MCF 10A (cell line): ENCODE measurements at regions of chr9 and their contacts with region 1.

Region 1: DNA sequence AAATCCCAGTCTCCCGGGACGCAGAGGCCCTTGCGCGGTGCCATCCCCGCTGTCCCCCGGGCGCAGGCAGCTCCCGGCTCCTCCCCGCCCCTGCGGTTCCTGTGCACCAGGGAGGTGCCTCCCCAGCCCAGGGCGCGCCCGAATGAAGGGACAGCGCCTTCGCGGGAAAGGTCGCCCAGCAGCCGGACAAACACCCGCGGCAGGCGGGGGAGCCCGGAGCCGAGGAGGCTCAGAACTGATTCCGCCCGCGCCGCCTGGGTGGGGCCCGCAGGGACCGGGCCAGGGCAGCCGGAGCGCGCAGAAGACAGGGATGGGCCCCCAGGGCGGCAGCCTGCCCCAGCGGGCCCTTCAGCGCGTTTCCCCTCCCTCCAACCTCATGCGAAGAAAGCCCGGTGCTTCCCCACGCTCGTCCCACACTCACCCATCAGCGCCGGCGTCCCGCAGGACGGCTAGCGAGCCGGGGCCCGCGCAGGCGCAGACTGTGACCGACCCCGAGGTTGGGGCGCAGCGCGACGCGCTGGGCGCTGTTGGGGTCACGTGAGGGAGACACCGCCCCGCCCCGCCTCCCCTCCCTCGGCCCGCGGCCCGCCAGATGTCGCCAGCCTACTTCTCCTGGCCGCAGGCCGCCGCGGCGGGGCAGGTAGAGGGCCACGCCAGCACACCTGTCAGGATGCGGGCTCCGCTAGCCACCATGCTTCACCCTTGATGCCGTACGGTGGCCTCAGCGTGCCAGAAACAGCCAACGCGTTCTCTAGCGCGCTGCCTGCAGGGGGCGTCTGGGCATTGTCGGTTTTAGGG is at the start of gene SLC25A51:
- DNase-seq: peak; percentile 93
- H3K4me3 Mint-ChIP-seq: peak within 1 kb of the TSS; percentile 80
- H3K27ac Mint-ChIP-seq: peak within 1 kb of the TSS; percentile 95
- H3K4me1 Mint-ChIP-seq: peaks cover 30% of the 10 kb centered on the region
- H3K27me3 Mint-ChIP-seq: no peaks in the 10 kb centered on the region
- CTCF ChIP-seq: peak; percentile 93
- total RNA-seq, gene SLC25A51: 29.6 and 30.3 TPM in 2 replicates

Region 2: GRCh38 chr9:37784616-37785483 is 119.0 kb before region 1 on chr9 and contains the start of gene EXOSC3:
- CTCF ChIA-PET with region 1: interaction called, 4 read pairs
- POLR2A ChIA-PET with region 1: interaction called, 24 read pairs
- intact Hi-C with region 1: loop called (anchors 1 kb)
- DNase-seq: peak; percentile 91
- H3K4me3 Mint-ChIP-seq: peak within 1 kb of the TSS; percentile 98
- H3K27ac Mint-ChIP-seq: peak within 1 kb of the TSS; percentile 98
- H3K4me1 Mint-ChIP-seq: peaks cover 12% of the 10 kb centered on the region
- H3K27me3 Mint-ChIP-seq: no peaks in the 10 kb centered on the region
- CTCF ChIP-seq: no peak
- total RNA-seq, gene EXOSC3: 44.8 and 50.9 TPM in 2 replicates

Region 3: GRCh38 chr9:38362852-38363593 is 459.2 kb after region 1 on chr9:
- CTCF ChIA-PET with region 1: interaction called, 5 read pairs
- POLR2A ChIA-PET with region 1: interaction called, 3 read pairs
- intact Hi-C with region 1: loop called (anchors 2 kb)
- DNase-seq: peak; percentile 74
- H3K4me3 Mint-ChIP-seq: no peak overlapping the region
- H3K27ac Mint-ChIP-seq: no peak overlapping the region
- H3K4me1 Mint-ChIP-seq: peaks cover 8% of the 10 kb centered on the region
- H3K27me3 Mint-ChIP-seq: no peaks in the 10 kb centered on the region
- CTCF ChIP-seq: peak; percentile 66